Aorta (tissue), 5 donors: ENCODE measurements at regions of chr12 and their contacts with region 1.

Region 1: DNA sequence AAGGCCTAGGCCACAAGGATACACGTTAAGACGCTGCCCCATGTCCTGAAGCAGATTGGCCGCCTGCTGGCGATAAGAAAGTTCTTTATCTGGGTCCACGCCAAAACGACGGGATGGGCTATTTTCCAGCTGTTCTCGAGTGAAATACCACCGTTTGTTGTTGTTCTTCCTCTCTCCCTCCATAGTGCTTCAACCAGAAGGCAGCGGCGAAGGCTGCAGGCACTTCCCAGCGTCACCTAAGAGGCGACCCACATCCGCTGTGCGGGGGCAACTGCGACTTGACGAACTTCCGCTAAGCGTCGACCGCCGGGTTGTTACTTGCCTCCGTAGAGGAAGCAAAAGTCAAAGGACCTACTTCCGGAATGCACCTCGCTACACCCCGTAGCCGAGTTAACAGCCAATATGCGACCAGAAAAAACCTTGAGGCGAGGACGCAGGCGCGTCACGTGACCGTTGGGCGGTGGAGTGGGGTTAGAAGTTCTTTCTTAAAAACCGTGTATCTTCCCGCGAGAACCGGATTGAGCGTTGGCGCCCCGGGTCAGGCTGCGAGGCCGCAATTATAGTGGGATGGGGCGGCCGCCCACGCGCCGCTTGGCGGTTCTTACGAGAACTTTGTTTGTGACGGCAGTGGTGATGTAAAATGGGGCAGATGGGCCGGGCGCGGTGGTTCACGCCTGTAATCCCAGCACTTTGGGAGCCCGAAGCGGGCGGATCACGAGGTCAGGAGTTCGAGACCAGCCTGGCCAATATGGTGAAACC is at the start of gene CCNT1:
- DNase-seq: peak; percentile 100
- ATAC-seq: peak; percentile 97
- H3K4me3 ChIP-seq: peak within 1 kb of the TSS; percentile 61 to 81
- H3K27ac ChIP-seq: peak within 1 kb of the TSS; percentile 31 to 91
- H3K4me1 ChIP-seq: peaks cover 0 to 3% of the 10 kb centered on the region in 2 donors
- H3K27me3 ChIP-seq: no peaks in the 10 kb centered on the region
- total RNA-seq, gene CCNT1: 36.7 to 42.0 TPM

Region 2: GRCh38 chr12:48681738-48682532 is 34.7 kb before region 1 on chr12 and contains the start of gene KANSL2:
- intact Hi-C with region 1: loop called in 1 of 2 experiments (anchors 1 kb)
- DNase-seq: peak; percentile 98 to 99
- ATAC-seq: peak; percentile 100
- H3K4me3 ChIP-seq: peak within 1 kb of the TSS; percentile 33 to 83
- H3K27ac ChIP-seq: peak within 1 kb of the TSS; percentile 78 to 83
- H3K4me1 ChIP-seq: peaks cover 2 to 5% of the 10 kb centered on the region in 2 donors
- H3K27me3 ChIP-seq: no peaks in the 10 kb centered on the region
- total RNA-seq, gene KANSL2: 23.4 to 25.6 TPM